Activated T-helper 1 cell treated with anti-CD3 and anti-CD28 coated beads, Interleukin-12 subunit alpha, Interleukin-12 subunit beta, Interleukin-2, Interleukin-4 antibody, amounts not matched to agents 30 ng/mL and 10 ng/mL and 1 ng/mL, durations not matched to agents 14 hours and 24 hours and 36 hours (primary cell): ENCODE measurements at regions of chr13 and their contacts with region 1.

Region 1: DNA sequence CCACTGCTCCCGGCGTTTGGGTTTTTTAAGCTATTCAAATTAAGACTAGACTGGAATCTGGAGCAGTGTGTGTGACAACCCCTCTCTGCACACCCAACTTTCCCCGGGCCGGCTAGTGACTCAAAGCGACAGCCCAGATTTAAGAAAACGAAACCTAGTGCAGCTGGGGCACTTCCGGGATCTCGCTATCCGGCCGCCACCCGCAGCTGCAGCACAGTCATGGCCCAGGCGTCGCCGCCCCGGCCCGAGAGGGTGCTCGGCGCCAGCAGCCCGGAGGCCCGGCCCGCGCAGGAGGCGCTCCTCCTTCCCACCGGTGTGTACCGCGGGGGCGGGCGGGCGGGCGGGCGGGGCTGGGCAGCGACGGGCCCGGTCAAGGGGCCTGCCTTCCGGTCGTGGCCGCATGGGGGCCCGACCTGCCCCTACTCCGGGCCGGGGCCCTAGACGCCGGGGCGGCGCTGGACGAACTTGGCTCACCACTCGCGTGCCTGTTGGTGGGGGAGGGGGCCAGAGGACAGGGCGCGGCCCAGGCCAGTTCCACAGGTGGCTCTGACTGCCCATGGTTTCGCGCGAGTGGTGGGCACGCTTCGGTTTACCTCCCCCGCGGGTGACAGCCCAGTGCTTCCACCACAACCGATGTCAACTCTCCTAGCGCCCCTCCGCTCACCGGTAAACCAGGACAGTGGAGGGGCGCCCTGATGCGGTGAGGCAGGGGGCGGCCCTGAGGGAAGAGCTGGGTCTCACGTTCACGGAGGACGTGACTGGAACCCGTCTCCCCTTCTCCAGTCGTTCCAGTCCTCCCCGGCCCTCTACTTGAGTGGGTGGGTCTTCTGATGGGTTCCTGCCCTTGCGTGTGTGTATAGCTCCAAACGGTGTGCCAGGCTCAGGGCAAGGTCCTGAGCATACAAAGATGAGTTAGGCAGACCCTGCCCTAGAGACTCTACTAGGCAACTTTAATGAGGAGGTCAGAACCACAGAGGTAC is at the start of gene PHF11:
- DNase-seq: peak; percentile 85
- H3K4me3 Mint-ChIP-seq: peak within 1 kb of the TSS; percentile 96
- H3K27ac Mint-ChIP-seq: peak within 1 kb of the TSS; percentile 99
- H3K4me1 Mint-ChIP-seq: peaks cover 57% of the 10 kb centered on the region
- H3K27me3 Mint-ChIP-seq: no peaks in the 10 kb centered on the region
- total RNA-seq, gene PHF11: 66.0 and 68.0 TPM in 2 replicates

Region 2: GRCh38 chr13:49110122-49110912 is 385.8 kb before region 1 on chr13:
- intact Hi-C with region 1: loop called (anchors 5 kb)
- DNase-seq: peak; percentile 71
- H3K4me3 Mint-ChIP-seq: peak overlapping the region; percentile 87
- H3K27ac Mint-ChIP-seq: peak overlapping the region; percentile 70
- H3K4me1 Mint-ChIP-seq: peaks cover 31% of the 10 kb centered on the region
- H3K27me3 Mint-ChIP-seq: no peaks in the 10 kb centered on the region

Region 3: DNA sequence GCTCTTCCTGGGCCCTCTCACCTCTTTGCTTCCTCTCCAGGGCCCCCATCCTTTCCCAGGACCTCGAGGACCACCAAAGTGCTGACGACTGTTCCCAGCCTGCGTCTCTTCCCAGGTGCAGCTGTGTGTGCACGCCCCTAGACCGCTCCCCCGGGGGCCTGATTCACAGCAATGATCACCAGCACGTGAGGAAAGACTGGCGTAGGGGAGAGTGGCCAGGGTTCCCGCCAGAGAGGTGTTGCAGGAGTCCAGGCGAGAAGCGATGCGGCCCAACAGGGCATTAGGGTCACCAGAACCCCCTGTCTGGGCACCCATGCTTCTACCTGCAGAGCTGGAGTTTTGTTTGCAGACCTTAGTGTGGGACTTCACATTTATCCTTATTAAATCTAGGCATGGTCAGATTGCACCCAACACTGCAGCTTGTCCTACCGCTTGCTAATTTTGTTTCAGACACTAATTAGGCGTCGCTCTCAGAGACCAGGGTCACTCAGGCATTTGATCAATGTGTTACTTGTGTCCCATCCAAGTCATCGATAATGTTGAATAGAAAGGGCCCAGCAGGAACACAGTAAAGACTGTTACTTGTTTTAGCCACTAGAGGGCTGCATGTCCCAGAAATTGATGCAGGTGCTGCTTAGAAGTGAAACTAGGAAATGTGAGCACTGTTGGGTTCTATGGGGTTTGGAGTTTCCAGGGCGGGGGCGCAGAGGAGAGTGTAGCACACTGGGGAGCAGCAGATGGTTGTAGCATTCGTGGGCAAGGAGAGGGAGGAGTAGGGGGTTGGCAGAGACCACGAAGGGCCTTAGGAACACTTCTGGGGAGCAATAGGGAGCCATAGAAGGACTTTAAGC is 195.1 kb before region 1 on chr13:
- intact Hi-C with region 1: loop called (anchors 1 kb)
- DNase-seq: peak; percentile 61
- H3K4me3 Mint-ChIP-seq: peak overlapping the region; percentile 10
- H3K27ac Mint-ChIP-seq: peak overlapping the region; percentile 65
- H3K4me1 Mint-ChIP-seq: peaks cover 14% of the 10 kb centered on the region
- H3K27me3 Mint-ChIP-seq: no peaks in the 10 kb centered on the region

Region 4: GRCh38 chr13:49388256-49388655 is 107.8 kb before region 1 on chr13:
- intact Hi-C with region 1: no loop called
- DNase-seq: no peak
- H3K4me3 Mint-ChIP-seq: no peak overlapping the region
- H3K27ac Mint-ChIP-seq: no peak overlapping the region
- H3K4me1 Mint-ChIP-seq: no peaks in the 10 kb centered on the region
- H3K27me3 Mint-ChIP-seq: peaks cover 7% of the 10 kb centered on the region

Region 5: DNA sequence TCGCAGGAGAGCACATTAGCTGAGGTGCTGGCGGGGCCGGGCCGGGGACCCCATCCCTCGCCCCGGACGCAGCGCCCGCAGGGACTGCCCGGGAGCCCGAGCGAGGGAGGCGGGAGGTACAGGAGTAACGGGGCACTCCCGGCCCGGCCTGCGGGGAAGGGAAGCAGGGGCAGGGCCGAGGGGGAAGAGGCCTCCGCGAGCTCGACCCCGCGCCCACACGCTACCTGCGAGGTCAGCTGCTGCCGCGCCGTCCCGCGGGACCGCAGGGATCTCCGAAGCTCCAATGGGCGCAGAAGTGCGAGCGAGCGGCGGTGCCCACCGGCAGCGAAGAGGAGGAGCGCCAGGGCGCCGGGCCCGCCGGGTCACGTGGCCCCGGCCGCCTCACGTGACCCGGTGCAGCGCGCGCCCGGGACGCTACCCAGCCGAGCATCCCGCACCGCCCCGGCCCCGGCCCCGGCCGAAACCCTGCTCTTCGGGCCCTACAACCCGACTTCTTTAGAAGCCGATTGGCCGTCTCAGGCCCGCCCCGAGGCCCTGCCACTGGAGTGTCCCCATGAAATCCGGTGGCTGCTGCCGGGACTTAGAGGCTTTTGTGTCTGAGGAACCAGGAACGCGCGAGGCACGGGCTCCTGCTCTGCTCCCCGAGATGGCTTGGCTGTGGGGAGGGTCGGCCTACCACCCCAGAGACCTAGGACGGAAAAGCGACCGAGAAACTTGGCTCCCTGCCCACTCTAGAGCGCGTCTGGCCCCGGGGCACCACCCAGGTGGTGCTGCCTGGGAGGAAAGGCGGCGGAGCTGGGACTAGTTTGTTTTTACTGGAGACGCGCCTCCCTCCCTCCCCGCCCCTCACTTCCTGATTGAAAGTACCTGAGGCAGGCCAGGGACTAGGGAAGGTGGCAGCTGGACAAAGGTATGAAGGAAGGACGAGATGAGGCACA is 89.4 kb after region 1 on chr13 and contains the start of gene RCBTB1:
- intact Hi-C with region 1: loop called (anchors 1 kb)
- DNase-seq: peak; percentile 60
- H3K4me3 Mint-ChIP-seq: peak within 1 kb of the TSS; percentile 90
- H3K27ac Mint-ChIP-seq: peak within 1 kb of the TSS; percentile 93
- H3K4me1 Mint-ChIP-seq: peaks cover 20% of the 10 kb centered on the region
- H3K27me3 Mint-ChIP-seq: peaks cover 2% of the 10 kb centered on the region
- total RNA-seq, gene RCBTB1: 14.9 and 16.3 TPM in 2 replicates

Region 6: DNA sequence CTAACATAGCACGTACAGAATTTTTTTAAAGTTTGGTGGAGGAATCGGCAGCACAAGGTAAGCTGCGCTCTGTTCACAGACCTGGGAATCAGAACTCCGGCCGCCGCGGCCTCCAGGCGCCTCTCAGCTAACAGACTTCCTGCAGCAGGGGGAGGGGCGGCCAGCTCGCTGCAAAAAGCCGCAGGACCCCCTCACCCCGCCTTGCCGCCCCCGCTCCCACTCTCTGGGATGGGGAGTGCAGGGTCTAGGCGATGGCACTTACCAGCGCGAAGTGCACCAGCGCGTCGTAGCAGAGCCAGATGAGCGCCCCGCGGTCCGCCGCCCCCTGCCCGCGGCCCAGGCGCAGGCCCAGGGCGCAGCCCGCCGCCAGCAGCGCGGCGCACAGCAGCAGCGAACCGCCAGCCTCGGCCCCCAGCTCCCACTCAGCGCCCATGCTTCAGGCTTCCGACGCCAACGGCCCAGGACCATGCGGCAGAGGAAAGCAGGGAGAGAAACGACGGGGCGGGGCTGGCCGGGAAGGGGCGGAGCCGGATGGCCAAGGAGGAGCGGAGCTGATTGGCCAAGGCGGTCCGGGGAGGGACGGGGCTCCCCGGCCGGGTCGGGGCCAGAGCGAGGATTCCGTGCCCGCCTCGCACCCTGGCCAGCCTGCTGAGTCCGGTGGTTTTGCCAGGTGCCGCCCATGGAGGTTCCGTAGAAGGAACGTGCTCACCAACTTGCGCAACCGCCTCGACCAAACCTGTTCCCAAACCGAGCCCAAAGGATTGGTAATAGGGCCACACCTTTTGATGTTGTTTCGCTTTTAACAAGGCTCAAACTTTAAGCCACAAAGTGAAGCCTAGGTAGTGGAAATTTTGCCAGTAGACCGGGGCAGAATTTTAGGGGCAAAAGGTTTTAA is 195.2 kb after region 1 on chr13 and contains the start of gene EBPL:
- intact Hi-C with region 1: loop called (anchors 5 kb)
- DNase-seq: peak; percentile 83
- H3K4me3 Mint-ChIP-seq: peak within 1 kb of the TSS; percentile 92
- H3K27ac Mint-ChIP-seq: peak within 1 kb of the TSS; percentile 77
- H3K4me1 Mint-ChIP-seq: peaks cover 34% of the 10 kb centered on the region
- H3K27me3 Mint-ChIP-seq: no peaks in the 10 kb centered on the region
- total RNA-seq, gene EBPL: 42.6 and 44.6 TPM in 2 replicates

Region 7: DNA sequence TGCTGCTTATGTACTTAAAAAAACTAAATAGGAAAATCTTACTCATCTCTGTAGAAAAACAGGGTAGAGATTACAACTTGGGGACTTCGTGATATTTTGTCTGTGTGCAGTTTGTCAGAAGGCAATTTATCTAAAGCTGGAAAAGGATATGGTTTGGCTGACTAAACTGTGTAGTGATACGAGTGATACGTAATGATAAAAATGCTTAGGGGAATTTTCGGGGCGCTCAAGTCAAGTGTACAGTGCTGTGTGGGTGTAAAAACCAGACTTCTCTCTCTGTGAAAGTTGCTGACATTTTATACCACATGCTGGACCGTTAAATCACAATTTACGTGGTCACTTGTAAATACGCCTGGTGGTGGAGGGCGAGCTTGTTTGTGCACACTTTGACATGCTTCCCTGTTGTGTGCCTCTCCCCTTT is 740.8 kb after region 1 on chr13:
- intact Hi-C with region 1: loop called (anchors 5 kb)
- DNase-seq: peak; percentile 45
- H3K4me3 Mint-ChIP-seq: peak overlapping the region; percentile 27
- H3K27ac Mint-ChIP-seq: peak overlapping the region; percentile 78
- H3K4me1 Mint-ChIP-seq: peaks cover 59% of the 10 kb centered on the region
- H3K27me3 Mint-ChIP-seq: peaks cover 22% of the 10 kb centered on the region